ENCODE measurements at regions of chr10 and their contacts with region 1.

Region 1: GRCh38 chr10:29443745-29444523 is 155.1 kb downstream of the LYZL1 start:
- DNase-seq: no peak
- H3K4me3 ChIP-seq: no peak overlapping the region
- H3K27ac ChIP-seq: no peak overlapping the region
- H3K4me1 ChIP-seq: peaks cover 0 to 5% of the 10 kb centered on the region in 2 donors
- H3K27me3 ChIP-seq: no peaks in the 10 kb centered on the region
- CTCF ChIP-seq: no peak

Region 2: DNA sequence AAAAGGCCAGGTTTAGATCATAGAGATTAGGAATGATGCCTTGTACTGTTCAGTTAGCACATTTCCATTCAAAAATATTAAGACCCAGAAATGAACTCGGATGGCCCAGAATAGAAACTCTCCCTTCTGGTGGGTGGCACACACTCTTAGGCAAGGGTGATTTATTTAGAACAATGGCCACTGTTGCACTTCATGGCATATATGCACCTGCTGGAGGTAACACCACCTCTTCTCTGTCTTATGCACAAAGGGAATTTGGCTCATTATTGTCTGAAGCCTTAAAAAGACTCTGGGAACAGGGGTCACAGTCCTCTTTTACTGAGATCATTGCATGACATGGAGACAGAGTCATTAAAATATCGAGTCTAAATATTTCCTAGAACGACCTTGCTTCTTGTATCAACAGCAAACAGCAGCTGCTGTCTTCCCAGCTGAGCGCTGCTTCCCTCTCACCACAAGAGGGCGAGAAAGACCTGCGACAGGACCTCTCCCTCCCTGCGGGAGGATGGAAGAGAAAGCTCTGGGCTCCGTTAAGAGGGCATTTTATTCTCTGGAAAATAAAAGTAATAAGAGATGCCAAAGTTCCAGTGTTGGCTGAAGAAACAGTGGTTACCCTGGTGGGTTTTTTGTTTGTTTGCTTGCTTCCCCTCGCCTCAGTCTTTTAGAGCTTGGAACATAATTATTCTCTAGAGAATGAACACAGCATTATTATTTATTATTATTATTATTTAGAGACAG is 780.2 kb before region 1 on chr10:
- intact Hi-C with region 1: loop called (anchors 10 kb)
- DNase-seq: peak; percentile 21 to 87
- H3K4me3 ChIP-seq: no peak overlapping the region
- H3K27ac ChIP-seq: peak overlapping the region; percentile 47 to 62
- H3K4me1 ChIP-seq: peaks cover 0 to 5% of the 10 kb centered on the region in 2 donors
- H3K27me3 ChIP-seq: no peaks in the 10 kb centered on the region
- CTCF ChIP-seq: peak; percentile 88 to 98 (median 97)

Region 3: DNA sequence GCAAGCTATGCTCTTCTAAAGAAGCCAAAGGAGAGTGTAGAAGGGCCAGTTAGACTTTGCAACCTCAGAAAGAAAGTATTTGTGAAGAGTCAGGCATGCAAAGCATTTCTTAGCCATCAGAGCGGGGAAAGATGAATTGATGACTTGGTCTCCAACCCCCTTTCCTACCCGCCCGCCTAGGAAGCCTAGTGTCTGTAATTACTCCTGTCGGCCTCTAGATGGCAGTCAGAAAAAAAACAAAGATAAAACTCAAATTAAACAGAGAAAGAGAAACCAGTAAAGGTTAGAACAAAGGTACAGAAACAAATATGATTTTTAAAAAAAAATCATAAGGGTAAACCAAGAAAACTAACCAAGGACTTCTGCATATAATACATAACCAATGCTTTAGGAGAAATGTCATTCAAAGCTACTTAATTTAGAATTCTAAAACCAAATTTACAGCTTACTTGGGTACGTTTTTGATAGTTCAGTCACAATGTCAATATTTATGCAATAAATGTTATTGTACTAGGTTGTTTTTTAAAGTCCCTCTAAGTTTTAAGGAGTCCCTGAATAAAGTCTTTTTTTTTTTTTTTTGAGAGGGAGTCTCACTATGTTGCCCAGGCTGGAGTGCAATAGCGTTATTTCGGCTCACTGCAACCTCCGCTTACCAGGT is 57.5 kb before region 1 on chr10:
- intact Hi-C with region 1: loop called (anchors 2 kb)
- DNase-seq: no peak
- H3K4me3 ChIP-seq: no peak overlapping the region
- H3K27ac ChIP-seq: no peak overlapping the region
- H3K4me1 ChIP-seq: no peaks in the 10 kb centered on the region
- H3K27me3 ChIP-seq: no peaks in the 10 kb centered on the region
- CTCF ChIP-seq: peak; percentile 36 to 86 (median 83)

Region 4: GRCh38 chr10:29409241-29410057 is 34.5 kb before region 1 on chr10:
- intact Hi-C with region 1: loop called (anchors 5 kb)
- DNase-seq: peak in 1 of 2 donors; percentile 80
- H3K4me3 ChIP-seq: peak overlapping the region; percentile 62 to 73
- H3K27ac ChIP-seq: peak overlapping the region; percentile 81 to 91
- H3K4me1 ChIP-seq: peaks cover 0 to 27% of the 10 kb centered on the region in 2 donors
- H3K27me3 ChIP-seq: no peaks in the 10 kb centered on the region
- CTCF ChIP-seq: no peak

Measured in ascending aorta (tissue), 2 donors.